Activated CD8-positive, alpha-beta T cell treated with anti-CD3 and anti-CD28 coated beads for 36 hours (primary cell): ENCODE measurements at regions of chr11 and their contacts with region 1.

Region 1: GRCh38 chr11:925496-926321 is at the start of gene AP2A2:
- DNase-seq: peak; percentile 90
- ATAC-seq: peak; percentile 80
- H3K4me3 Mint-ChIP-seq: peak within 1 kb of the TSS; percentile 78
- H3K27ac Mint-ChIP-seq: peak within 1 kb of the TSS; percentile 83
- H3K4me1 Mint-ChIP-seq: peaks cover 26% of the 10 kb centered on the region
- H3K27me3 Mint-ChIP-seq: no peaks in the 10 kb centered on the region
- CTCF ChIP-seq: peak; percentile 79
- total RNA-seq, gene AP2A2: 34.0 to 34.6 TPM

Region 2: DNA sequence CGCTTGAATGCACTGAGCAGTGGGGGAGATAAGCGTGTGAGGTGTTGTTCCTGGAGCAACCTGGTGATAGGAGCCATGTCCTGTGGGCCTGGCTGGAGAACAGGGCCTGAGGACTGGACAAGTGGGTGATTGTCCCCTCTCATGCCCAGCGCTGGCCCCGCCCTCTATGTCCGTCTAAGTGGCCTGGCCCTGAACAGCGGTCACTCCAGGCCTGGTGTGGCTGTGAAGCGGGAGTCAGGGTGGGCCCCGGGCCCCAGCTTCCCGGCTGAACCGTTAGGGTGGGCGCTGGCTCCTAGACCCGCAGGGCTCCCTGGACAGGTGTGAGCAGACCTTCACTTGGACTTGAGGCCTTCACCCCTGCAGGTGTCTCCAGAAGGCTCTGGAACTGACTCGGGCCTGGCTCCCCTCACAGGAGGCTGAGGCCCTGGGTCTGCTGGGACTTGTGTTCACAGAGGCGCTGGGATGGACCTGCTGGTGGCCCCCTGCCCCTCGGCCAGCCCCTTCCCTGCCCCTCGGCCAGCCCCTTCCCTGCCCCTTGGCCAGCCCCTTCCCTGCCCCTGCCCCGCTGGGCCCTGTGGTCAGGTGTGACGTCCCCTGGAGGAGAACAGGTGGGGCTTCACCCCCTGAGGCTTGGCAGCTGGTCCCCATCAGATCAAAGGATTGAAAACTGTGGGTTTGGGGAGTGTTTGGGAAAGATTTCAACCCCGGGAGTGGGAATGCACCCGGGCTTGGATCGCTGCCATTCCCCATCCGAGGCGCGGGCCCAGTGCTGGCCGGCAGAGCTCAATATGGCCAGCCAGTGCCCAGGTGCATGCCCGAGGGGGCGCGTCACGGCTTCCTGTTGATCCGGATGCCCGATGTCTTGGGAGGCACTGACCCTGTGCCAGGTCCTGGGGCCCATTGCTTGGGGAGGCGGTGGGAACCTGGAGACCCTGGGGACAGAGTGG is 114.0 kb after region 1 on chr11:
- CTCF ChIA-PET with region 1: no interaction called
- POLR2A ChIA-PET with region 1: no interaction called
- intact Hi-C with region 1: loop called (anchors 10 kb)
- DNase-seq: no peak
- ATAC-seq: no peak
- H3K4me3 Mint-ChIP-seq: no peak overlapping the region
- H3K27ac Mint-ChIP-seq: no peak overlapping the region
- H3K4me1 Mint-ChIP-seq: no peaks in the 10 kb centered on the region
- H3K27me3 Mint-ChIP-seq: peaks cover 2% of the 10 kb centered on the region
- CTCF ChIP-seq: no peak